ENCODE measurements at regions of chr9 and their contacts with region 1.

Region 1: DNA sequence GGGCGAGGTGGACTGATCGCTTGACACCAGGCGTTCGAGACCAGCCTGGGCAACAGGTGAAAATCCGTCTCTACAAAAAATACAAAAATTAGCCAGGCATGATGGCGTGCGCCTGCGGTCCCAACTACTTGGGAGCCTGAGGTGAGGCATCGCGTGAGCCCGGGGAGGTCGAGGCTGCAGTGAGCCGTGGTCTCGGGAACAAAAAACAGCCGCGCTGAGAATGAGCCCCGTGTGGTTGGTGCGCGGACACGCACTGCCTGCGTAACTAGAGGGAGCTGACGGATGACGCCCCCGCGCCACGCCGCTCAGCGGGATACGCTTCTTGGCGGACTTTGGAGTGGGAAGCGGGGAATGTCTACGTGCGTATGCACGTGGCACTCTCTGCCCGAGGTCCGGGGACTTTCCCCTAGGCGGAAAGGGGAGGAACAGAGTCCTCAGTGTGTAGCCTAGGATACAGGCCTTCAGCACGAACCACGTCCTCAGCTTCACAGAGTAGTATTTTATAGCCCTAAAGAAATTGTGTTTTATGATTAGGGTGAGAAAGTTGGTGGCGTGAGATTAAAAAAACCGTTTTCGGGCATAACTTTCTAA is at the start of gene RMRP:
- DNase-seq: peak; percentile 98 to 100
- ATAC-seq: peak; percentile 89 to 95
- H3K4me3 ChIP-seq: peak within 1 kb of the TSS; percentile 68
- H3K27ac ChIP-seq: peak within 1 kb of the TSS; percentile 93 to 98
- H3K4me1 ChIP-seq: peaks cover 26% of the 10 kb centered on the region
- CTCF ChIP-seq: no peak
- EP300 ChIP-seq: no peak
- POLR2A ChIP-seq: no peak
- RAD21 ChIP-seq: peak in 1 of 2 experiments; percentile 34; a peak in 4 of 5 replicates
- polyA plus RNA-seq, gene RMRP: 80.2 and 257 TPM in 2 replicates

Region 2: GRCh38 chr9:35603987-35604577 is 53.6 kb before region 1 on chr9:
- CTCF ChIA-PET with region 1: interaction called, 15 read pairs
- POLR2A ChIA-PET with region 1: interaction called, 8 read pairs
- DNase-seq: peak; percentile 99 to 100
- ATAC-seq: peak; percentile 82 to 95
- H3K4me3 ChIP-seq: peak overlapping the region; percentile 80
- H3K27ac ChIP-seq: peak overlapping the region; percentile 86 to 95
- H3K4me1 ChIP-seq: peaks cover 11% of the 10 kb centered on the region
- CTCF ChIP-seq: peak; percentile 90
- EP300 ChIP-seq: no peak
- POLR2A ChIP-seq: peak; percentile 84
- RAD21 ChIP-seq: peak; percentile 47 to 67

Region 3: DNA sequence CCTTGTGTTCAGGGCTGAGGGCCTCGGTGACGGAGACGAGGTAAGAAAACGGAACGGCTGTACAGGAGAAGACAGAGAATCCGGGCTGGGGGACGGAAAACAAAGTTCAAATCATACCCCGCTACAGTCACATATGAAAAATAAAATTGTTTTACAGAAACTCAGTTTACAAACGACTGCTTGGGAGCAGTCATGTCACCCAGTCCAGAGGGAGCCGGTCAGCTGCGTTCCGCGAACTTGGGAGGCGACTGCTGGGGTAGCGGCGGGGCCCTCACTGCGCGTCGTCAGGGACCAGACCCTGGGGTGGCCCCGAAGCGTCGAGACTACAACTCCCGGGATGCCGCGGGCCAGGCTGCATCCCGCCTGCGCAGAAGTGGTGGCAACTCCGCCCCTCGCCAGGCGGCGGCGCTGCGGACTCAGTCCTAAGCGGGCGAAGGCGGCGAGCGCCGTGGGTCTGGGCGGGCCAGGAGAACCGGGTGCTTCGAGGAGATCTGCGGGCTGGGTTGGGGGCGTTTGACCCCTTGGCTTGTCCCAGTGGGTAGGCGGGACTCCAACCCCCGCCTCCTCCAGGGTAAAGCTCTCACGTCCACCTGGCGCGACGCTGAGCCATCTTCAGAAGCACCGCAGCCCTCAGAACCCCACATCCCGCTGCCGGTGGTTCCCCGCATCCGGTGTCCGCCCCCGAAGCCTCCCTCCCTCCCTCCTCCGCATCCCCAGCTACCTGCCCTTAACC is 10.9 kb before region 1 on chr9:
- CTCF ChIA-PET with region 1: interaction called, 135 read pairs
- POLR2A ChIA-PET with region 1: interaction called, 3 read pairs
- DNase-seq: peak; percentile 90 to 95
- ATAC-seq: peak; percentile 93 to 97
- H3K4me3 ChIP-seq: peak overlapping the region; percentile 52
- H3K27ac ChIP-seq: peak overlapping the region; percentile 92 to 93
- H3K4me1 ChIP-seq: peaks cover 13% of the 10 kb centered on the region
- CTCF ChIP-seq: peak; percentile 87
- EP300 ChIP-seq: no peak
- POLR2A ChIP-seq: peak; percentile 66
- RAD21 ChIP-seq: peak; percentile 81 to 91

Region 4: DNA sequence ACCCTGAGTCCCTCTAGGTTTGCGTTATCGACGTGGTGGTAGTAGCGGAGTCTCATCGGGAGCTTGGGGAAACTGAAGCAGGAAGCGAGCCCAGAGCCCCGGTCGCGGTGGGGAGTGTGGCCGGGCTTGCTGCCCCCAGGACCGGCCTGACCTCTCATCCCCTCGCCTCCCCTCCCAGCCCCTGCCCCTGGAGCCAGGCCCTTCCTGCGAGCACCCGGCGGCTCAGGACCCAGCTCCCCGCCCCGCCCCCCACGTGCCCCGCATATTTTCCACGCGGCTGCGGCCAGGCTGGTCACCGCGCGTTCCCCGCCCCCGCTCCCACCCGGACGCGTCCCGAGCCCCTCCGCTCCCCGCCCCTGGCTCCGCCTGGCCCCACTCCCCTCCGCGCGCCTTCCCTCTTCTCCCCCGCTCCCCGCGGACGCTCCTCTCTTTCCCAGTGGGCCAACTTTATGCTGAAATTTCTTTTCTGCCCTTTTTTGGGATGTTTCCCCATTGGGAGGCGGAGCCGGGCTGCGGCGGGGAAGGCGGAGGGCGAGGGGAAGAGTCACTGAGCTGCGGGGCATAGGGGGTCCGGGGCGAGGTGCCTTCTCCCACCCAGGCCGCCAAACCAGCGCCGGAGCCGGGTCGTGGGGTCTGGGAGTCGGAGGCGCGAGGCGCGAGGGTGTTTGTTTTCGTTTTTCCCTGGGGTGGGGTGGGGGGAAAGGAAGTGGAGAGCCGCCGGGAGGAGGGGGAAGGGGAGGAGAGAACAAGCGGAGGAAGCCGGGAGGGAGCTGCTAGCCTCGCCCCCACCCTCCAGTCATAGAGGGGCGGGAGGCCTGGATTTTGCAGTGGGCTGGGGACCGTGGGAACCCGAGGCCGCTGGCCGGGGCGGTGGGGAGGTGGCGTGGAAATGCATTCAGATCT is 33.0 kb after region 1 on chr9:
- CTCF ChIA-PET with region 1: interaction called, 498 read pairs
- POLR2A ChIA-PET with region 1: interaction called, 23 read pairs
- DNase-seq: peak; percentile 68 to 71
- ATAC-seq: peak; percentile 60 to 71
- H3K4me3 ChIP-seq: peak overlapping the region; percentile 87
- H3K27ac ChIP-seq: peak overlapping the region; percentile 93 to 99
- H3K4me1 ChIP-seq: peaks cover 37% of the 10 kb centered on the region
- CTCF ChIP-seq: no peak
- EP300 ChIP-seq: no peak
- POLR2A ChIP-seq: 0 out of 2 replicates have a peak, but pooled peaks have one; percentile 30
- RAD21 ChIP-seq: no peak

Region 5: DNA sequence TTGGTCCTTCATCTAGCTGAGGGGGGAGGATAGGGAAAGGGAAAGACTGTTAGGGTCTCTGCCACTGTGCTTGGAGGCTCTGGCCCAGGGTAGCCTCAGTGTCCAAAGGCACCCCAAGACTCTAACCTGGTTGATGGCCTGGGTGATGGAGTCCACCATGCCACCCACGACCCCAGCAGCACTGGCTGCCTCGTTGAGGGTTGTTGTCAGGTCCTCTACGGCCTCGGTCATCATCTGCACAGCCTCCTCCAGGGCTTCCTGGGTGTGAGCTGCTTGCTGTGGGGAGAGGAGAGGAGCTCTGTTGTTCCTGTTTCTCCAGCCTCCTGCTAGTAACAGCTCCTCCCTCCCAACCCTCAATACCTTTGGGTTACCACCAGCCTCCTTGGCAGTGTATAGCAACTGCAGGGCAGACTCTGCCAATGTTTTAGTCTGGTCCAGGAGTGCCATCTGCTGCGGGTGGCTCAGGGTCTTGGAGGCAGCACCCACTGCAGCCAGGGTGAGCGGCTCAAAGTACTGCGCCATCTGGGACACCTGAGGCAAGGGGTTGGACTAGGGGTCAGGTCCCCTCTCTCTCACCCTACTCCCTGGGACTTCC is 48.3 kb after region 1 on chr9:
- CTCF ChIA-PET with region 1: interaction called, 16 read pairs
- POLR2A ChIA-PET with region 1: interaction called, 6 read pairs
- DNase-seq: no peak
- ATAC-seq: no peak
- H3K4me3 ChIP-seq: no peak overlapping the region
- H3K27ac ChIP-seq: no peak overlapping the region
- H3K4me1 ChIP-seq: no peaks in the 10 kb centered on the region
- CTCF ChIP-seq: no peak
- EP300 ChIP-seq: no peak
- POLR2A ChIP-seq: no peak
- RAD21 ChIP-seq: no peak

Region 6: DNA sequence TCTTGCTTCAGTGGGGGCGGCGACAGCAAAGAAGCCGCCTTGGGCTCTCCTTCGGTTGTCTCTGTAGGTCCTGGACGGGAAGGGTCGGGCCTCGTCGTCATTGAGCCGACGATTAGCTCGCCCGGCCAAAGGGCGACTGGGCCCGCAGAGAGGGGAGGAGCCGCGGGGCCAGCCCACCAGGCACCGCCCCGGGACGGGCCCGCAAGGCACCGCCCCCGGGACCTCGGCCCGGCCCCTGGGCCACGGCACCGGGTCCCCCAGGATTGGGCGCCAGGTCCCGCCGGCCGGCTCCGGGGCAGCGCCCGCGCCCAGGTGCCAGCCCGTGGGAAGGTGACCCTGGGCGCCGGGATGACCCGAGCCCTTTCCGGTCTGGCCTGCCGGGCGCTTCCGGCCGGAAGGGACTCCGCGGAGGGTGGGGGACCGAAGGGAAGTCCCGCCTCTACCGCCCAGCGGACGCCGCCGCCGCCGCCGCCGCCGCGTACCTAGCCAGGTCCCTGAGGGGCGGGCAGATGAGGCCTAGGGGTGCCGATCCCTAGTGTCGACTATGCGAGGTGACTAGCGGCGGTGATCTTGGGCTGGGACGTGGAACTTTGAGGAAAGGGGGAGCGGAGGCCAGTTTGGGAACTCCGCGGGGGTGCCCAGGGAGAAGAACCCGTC is 91.3 kb after region 1 on chr9 and contains the starts of genes GBA2 and RGP1:
- CTCF ChIA-PET with region 1: interaction called, 13 read pairs
- POLR2A ChIA-PET with region 1: interaction called, 7 read pairs
- DNase-seq: peak; percentile 62 to 81
- ATAC-seq: peak; percentile 91 to 93
- H3K4me3 ChIP-seq: peak within 1 kb of the TSS; percentile 69
- H3K27ac ChIP-seq: peak within 1 kb of the TSS; percentile 84 to 99
- H3K4me1 ChIP-seq: peaks cover 30% of the 10 kb centered on the region
- CTCF ChIP-seq: no peak
- EP300 ChIP-seq: no peak
- POLR2A ChIP-seq: peak; percentile 42; the same call in 1 of the 2 replicates
- RAD21 ChIP-seq: no peak
- polyA plus RNA-seq, gene GBA2: 40.0 and 47.4 TPM in 2 replicates
- polyA plus RNA-seq, gene RGP1: 16.6 and 20.2 TPM in 2 replicates

Measured in A549 (cell line).